ENCODE measurements at regions of chr11 and their contacts with region 1.

Region 1: GRCh38 chr11:133134314-133135173 is 397.8 kb downstream of the OPCML start:
- DNase-seq: peak; percentile 68
- H3K4me3 ChIP-seq: peak overlapping the region in 1 of 2 experiments; percentile 50; a peak in 1 of 4 replicates
- H3K27ac ChIP-seq: no peak overlapping the region
- H3K4me1 ChIP-seq: no peaks in the 10 kb centered on the region; a peak in 1 of 4 replicates
- H3K27me3 ChIP-seq: no peaks in the 10 kb centered on the region
- CTCF ChIP-seq: peak; percentile 44
- EP300 ChIP-seq: no peak
- RAD21 ChIP-seq: peak; percentile 74

Region 2: GRCh38 chr11:132948252-132948651 is 186.3 kb before region 1 on chr11:
- CTCF ChIA-PET with region 1: no interaction called
- POLR2A ChIA-PET with region 1: no interaction called
- DNase-seq: no peak
- H3K4me3 ChIP-seq: no peak overlapping the region
- H3K27ac ChIP-seq: no peak overlapping the region
- H3K4me1 ChIP-seq: no peaks in the 10 kb centered on the region; a peak in 1 of 4 replicates
- H3K27me3 ChIP-seq: peaks cover 2% of the 10 kb centered on the region; the same call in 1 of the 2 replicates
- CTCF ChIP-seq: no peak
- EP300 ChIP-seq: no peak
- RAD21 ChIP-seq: no peak

Region 3: GRCh38 chr11:133024301-133024700 is 110.2 kb before region 1 on chr11:
- CTCF ChIA-PET with region 1: no interaction called
- POLR2A ChIA-PET with region 1: no interaction called
- DNase-seq: no peak
- H3K4me3 ChIP-seq: no peak overlapping the region
- H3K27ac ChIP-seq: no peak overlapping the region
- H3K4me1 ChIP-seq: no peaks in the 10 kb centered on the region; a peak in 1 of 4 replicates
- H3K27me3 ChIP-seq: no peaks in the 10 kb centered on the region
- CTCF ChIP-seq: no peak
- EP300 ChIP-seq: no peak
- RAD21 ChIP-seq: no peak

Region 4: DNA sequence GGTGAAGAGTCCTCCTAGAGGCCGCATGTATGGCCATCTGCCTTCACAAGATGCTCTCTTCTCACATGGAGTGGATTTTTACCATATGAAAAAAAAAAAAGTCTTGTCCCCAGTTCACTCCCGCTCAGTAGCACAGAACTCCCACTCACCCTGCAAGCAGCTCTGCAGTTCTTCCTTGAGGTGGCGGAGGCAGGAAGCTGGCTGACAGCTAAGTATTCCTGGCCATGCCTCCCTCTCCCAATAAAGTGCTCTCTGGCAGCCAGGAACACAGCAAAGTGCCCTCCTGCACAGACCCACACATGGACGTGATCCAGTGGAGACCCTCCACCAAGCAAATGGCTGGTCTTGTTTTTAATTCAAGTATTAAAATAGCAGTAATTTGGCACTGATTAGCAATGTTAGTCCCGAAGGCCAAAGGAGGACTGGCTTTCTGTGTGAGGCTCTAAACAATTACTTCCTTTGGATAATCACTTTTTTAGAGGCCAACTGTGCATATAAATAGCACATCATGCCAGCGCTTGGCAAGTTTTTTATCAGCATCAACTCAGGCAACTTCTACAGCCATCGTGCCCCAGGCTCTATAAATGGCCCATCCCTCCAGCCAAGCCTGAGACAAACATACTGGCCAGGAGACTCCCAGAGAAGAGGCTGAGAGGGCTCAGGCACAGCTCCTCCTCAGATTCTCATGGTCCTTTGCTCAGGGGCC is 15.8 kb before region 1 on chr11:
- CTCF ChIA-PET with region 1: interaction called, 11 read pairs
- POLR2A ChIA-PET with region 1: no interaction called
- DNase-seq: no peak
- H3K4me3 ChIP-seq: no peak overlapping the region
- H3K27ac ChIP-seq: no peak overlapping the region
- H3K4me1 ChIP-seq: no peaks in the 10 kb centered on the region
- H3K27me3 ChIP-seq: no peaks in the 10 kb centered on the region
- CTCF ChIP-seq: no peak
- EP300 ChIP-seq: no peak
- RAD21 ChIP-seq: no peak

Region 5: GRCh38 chr11:133156986-133157745 is 22.6 kb after region 1 on chr11:
- CTCF ChIA-PET with region 1: interaction called, 30 read pairs
- POLR2A ChIA-PET with region 1: no interaction called
- DNase-seq: peak; percentile 34
- H3K4me3 ChIP-seq: no peak overlapping the region; a peak in 1 of 4 replicates
- H3K27ac ChIP-seq: no peak overlapping the region
- H3K4me1 ChIP-seq: no peaks in the 10 kb centered on the region
- H3K27me3 ChIP-seq: no peaks in the 10 kb centered on the region
- CTCF ChIP-seq: no peak
- EP300 ChIP-seq: no peak
- RAD21 ChIP-seq: peak; percentile 45; the same call in 1 of the 2 replicates

Region 6: DNA sequence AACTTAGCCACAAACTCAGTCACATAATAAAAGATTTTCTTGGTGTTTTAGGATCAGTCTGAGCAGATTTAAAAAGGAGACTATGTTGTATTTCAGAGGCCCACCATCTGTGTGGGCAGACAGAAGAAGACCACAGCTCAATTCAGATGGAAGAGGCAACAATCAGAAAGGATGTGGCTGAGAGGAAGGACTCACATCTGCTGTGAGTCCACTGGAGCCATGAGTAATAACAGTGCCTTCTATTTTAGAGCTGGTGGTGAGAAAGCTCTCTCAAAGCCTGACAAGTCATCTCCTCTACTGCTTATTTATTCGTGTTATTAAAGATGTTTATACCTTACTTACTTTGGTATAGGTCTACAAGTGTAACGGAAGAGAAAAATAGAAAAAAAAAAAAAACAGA is 40.6 kb after region 1 on chr11:
- CTCF ChIA-PET with region 1: interaction called, 10 read pairs
- POLR2A ChIA-PET with region 1: no interaction called
- DNase-seq: no peak
- H3K4me3 ChIP-seq: no peak overlapping the region
- H3K27ac ChIP-seq: no peak overlapping the region
- H3K4me1 ChIP-seq: no peaks in the 10 kb centered on the region
- H3K27me3 ChIP-seq: no peaks in the 10 kb centered on the region
- CTCF ChIP-seq: no peak
- EP300 ChIP-seq: no peak
- RAD21 ChIP-seq: no peak

Region 7: DNA sequence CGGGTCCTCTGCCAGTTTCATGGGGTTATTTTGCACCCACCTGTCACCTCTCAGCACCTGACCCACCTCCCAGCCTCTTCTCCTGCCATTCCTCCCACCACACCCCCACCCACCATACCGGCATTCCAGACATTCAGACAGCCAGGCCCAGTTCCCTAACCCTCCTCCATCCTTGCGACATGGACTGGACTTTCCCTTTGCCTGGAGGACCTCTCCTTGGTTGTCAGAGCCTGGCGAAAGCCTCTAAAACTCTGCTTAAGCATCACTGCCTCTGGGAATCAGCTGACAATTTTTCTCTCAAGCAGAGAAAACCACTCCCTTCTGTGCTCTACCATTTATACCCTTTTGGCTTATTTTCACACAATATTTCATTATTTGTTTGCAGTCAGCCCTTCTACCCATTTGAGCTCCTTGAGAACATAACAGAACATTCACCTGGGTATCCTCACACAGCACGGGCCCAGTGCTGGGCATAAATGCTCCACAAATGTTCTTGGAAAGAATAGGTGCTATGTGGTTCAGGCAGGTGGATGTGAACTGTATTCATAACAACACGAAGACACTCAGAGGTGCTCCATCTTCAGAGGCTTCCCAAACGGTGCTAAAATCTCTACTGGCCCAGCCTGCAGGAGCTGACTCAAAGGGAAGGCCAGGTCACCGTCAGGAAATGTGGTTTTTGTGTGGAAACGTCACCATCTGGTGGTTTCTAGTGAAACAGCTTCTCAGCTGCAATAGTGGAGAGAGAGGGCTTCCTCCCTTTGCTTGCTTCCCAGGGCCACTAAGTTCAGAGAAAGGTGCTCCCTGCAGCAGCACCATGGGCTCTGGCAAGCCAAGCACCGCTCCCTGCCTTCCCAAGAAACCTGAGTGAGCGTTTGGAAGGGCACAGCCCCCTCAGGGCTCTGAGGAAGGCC is 700.4 kb after region 1 on chr11:
- CTCF ChIA-PET with region 1: interaction called, 72 read pairs
- POLR2A ChIA-PET with region 1: no interaction called
- DNase-seq: peak; percentile 79
- H3K4me3 ChIP-seq: no peak overlapping the region; a peak in 1 of 4 replicates
- H3K27ac ChIP-seq: no peak overlapping the region
- H3K4me1 ChIP-seq: no peaks in the 10 kb centered on the region
- H3K27me3 ChIP-seq: no peaks in the 10 kb centered on the region
- CTCF ChIP-seq: peak; percentile 34; the same call in 1 of the 2 replicates
- EP300 ChIP-seq: no peak
- RAD21 ChIP-seq: peak; percentile 89